Dendritic cell treated with granulocyte-macrophage colony-stimulating factor and Interleukin-4, amounts not matched to agents 40 ng/mL and 50 ng/mL, for 4 days (primary cell): ENCODE measurements at regions of chrX and their contacts with region 1.

Region 1: DNA sequence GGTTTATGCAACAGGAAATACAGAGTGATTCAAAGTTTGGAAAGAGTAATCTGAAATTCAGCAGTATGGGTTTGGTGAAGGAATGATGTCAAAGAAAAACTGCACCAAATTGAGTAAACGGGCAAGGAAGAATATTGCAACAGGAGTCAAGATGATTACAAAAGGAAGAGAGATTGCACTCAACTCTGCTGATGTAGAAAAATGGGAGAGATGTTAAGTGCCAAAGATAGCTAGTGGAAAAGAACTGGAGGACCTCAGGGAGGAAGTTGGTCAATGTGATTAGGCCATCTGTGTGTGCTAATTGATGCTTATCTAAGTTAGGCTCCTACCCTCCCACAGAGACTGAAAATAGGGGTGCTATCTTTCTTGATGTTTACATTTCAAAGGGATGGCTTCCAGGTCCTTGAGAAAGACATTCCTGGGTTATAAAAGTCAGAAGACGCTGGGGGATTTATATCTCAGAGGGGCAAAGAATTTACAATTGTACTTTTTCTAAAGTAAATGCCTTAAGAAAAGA is 167.4 kb upstream of the FAM47A start:
- H3K4me3 Mint-ChIP-seq: no peak overlapping the region
- H3K27ac Mint-ChIP-seq: no peak overlapping the region
- H3K4me1 Mint-ChIP-seq: no peaks in the 10 kb centered on the region
- H3K27me3 Mint-ChIP-seq: no peaks in the 10 kb centered on the region

Region 2: DNA sequence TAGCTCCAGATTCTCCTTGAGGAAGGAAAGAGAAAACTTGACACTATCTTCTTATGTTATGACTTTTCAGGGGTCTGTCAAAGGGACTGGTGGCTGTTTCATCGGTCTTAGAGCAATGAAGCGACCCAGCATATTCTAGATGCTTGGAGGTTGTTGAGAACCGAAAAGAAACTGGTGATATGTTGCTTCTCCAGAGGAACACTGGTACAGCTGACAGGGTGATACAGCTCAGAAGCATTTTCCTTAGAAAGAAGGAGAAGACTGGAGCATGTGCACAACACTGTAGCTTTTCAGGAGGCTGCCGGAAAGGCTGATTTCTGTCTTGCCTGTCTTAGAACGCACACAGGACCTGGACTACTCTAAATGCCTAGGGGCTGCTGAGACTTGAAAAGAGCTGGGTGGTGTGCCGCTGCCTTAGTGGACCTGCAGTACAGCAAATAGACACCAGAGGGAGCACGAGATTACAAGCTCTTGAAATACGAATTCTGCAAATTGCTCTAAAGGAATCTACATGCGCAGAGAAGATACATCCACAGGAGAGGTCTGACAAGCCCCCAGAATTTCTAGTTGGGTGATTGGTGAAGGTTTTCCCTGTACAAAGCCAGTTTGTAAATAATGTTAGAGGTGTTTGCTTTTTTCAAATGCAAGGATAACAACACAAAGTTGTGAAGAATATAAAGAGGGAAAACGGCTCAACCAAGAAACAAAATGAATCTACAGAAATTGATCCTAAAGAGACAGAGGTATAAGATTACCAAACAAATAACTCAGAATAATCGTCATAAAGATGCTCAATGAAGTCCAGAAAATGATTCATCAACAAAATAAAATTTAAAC is 865.0 kb before region 1 on chrX:
- intact Hi-C with region 1: loop called (anchors 10 kb)
- H3K4me3 Mint-ChIP-seq: no peak overlapping the region
- H3K27ac Mint-ChIP-seq: no peak overlapping the region
- H3K4me1 Mint-ChIP-seq: no peaks in the 10 kb centered on the region
- H3K27me3 Mint-ChIP-seq: no peaks in the 10 kb centered on the region

Region 3: GRCh38 chrX:34341258-34341657 is 41.7 kb after region 1 on chrX:
- intact Hi-C with region 1: no loop called
- H3K4me3 Mint-ChIP-seq: no peak overlapping the region
- H3K27ac Mint-ChIP-seq: no peak overlapping the region
- H3K4me1 Mint-ChIP-seq: no peaks in the 10 kb centered on the region
- H3K27me3 Mint-ChIP-seq: no peaks in the 10 kb centered on the region